HCT116 (cell line): ENCODE measurements at regions of chr17 and their contacts with region 1.

Region 1: GRCh38 chr17:66567234-66568170 is 265.1 kb downstream of the PRKCA start:
- DNase-seq: peak; percentile 71
- ATAC-seq: peak; percentile 97
- H3K4me3 ChIP-seq: no peak overlapping the region
- H3K27ac ChIP-seq: no peak overlapping the region
- H3K4me1 ChIP-seq: peaks cover 14 to 19% of the 10 kb centered on the region in 2 experiments; a peak in 3 of 4 replicates
- H3K27me3 ChIP-seq: no peaks in the 10 kb centered on the region
- CTCF ChIP-seq: peak; percentile 88 to 99 (median 98)
- POLR2A ChIP-seq: no peak
- RAD21 ChIP-seq: peak; percentile 98

Region 2: GRCh38 chr17:66255112-66255511 is 312.4 kb before region 1 on chr17:
- CTCF ChIA-PET with region 1: interaction called, 12 read pairs
- POLR2A ChIA-PET with region 1: no interaction called
- RAD21 ChIA-PET with region 1: interaction called, 6 to 8 read pairs
- intact Hi-C with region 1: loop called (anchors 1 kb)
- DNase-seq: peak; percentile 79
- ATAC-seq: peak; percentile 95
- H3K4me3 ChIP-seq: no peak overlapping the region
- H3K27ac ChIP-seq: no peak overlapping the region
- H3K4me1 ChIP-seq: peaks cover 0 to 4% of the 10 kb centered on the region in 2 experiments; a peak in 1 of 4 replicates
- H3K27me3 ChIP-seq: no peaks in the 10 kb centered on the region; the same call in 1 of the 2 replicates
- CTCF ChIP-seq: peak; percentile 75 to 97 (median 91)
- POLR2A ChIP-seq: no peak
- RAD21 ChIP-seq: peak; percentile 99

Region 3: DNA sequence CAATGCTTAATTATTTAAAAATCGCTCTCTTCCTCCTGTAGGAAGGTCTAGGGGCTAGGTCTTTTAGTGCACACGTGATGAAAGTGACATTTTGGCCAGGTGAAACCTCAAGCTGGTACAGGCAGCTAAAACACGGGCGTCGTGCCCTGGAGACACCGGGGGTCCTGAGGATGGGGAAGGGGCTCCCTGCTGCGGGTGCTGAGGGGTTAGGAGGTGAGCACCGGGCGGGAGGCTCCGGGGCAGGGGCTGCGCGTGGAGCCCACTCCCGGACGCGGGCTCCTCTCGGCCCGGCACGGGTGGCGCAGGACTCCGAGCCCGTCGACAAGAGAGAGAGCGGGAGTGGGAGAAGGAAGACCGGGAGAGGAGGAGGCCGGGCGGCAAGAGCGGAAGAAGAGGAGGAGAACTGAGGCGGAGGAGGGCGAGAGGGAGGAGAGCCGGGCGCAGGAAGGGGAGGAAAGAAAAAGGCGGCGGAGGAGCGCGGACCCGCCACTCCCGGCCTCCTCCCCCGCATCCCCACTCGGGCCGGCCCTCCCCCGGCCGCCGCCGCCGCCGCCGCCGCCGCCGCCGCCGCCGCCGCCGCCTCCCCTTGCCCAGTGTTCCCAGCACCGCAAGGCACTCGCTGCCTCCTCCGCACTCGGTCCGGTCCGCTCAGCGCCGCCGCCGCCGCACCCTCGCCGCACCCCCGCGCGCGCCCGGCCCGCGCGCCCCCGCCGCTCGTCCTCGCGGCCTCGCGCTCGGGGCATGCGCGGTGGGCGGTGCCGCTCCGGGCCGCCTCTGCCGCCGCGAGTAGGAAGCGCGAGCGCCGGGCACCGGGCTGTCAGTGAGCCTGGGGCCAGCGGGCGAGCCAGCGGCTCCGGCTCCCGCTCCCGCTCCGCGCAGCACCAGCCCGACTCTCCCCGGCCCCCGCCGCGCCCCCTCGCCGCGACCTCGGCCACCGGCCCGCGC is 265.4 kb before region 1 on chr17 and contains the start of gene PRKCA:
- CTCF ChIA-PET with region 1: no interaction called
- POLR2A ChIA-PET with region 1: no interaction called
- RAD21 ChIA-PET with region 1: no interaction called
- intact Hi-C with region 1: loop called (anchors 5 kb)
- DNase-seq: peak; percentile 29
- ATAC-seq: peak; percentile 87
- H3K4me3 ChIP-seq: peak within 1 kb of the TSS; percentile 69 to 81
- H3K27ac ChIP-seq: peak within 1 kb of the TSS; percentile 33; the same call in 1 of the 2 replicates
- H3K4me1 ChIP-seq: peaks cover 6 to 22% of the 10 kb centered on the region in 2 experiments; a peak in 3 of 4 replicates
- H3K27me3 ChIP-seq: no peaks in the 10 kb centered on the region
- CTCF ChIP-seq: no peak
- POLR2A ChIP-seq: peak; percentile 87
- RAD21 ChIP-seq: no peak
- total RNA-seq, gene PRKCA: 18.8 TPM

Region 4: GRCh38 chr17:66426397-66427033 is 141.0 kb before region 1 on chr17:
- CTCF ChIA-PET with region 1: interaction called, 3 read pairs
- POLR2A ChIA-PET with region 1: no interaction called
- RAD21 ChIA-PET with region 1: interaction called in 1 of 2 experiments, 3 read pairs
- intact Hi-C with region 1: loop called (anchors 5 kb)
- DNase-seq: peak; percentile 31
- ATAC-seq: peak; percentile 98
- H3K4me3 ChIP-seq: no peak overlapping the region
- H3K27ac ChIP-seq: no peak overlapping the region
- H3K4me1 ChIP-seq: peaks cover 0 to 7% of the 10 kb centered on the region in 2 experiments; a peak in 1 of 4 replicates
- H3K27me3 ChIP-seq: no peaks in the 10 kb centered on the region
- CTCF ChIP-seq: peak; percentile 54 to 65 (median 63)
- POLR2A ChIP-seq: no peak
- RAD21 ChIP-seq: peak; percentile 76

Region 5: GRCh38 chr17:66549731-66550207 is 17.7 kb before region 1 on chr17:
- CTCF ChIA-PET with region 1: interaction called, 32 read pairs
- POLR2A ChIA-PET with region 1: no interaction called
- RAD21 ChIA-PET with region 1: no interaction called
- intact Hi-C with region 1: no loop called
- DNase-seq: peak; percentile 44
- ATAC-seq: peak; percentile 18
- H3K4me3 ChIP-seq: peak overlapping the region in 1 of 2 experiments; percentile 50; a peak in 2 of 4 replicates
- H3K27ac ChIP-seq: peak overlapping the region; percentile 61
- H3K4me1 ChIP-seq: peaks cover 50 to 51% of the 10 kb centered on the region in 2 experiments
- H3K27me3 ChIP-seq: no peaks in the 10 kb centered on the region
- CTCF ChIP-seq: no peak
- POLR2A ChIP-seq: no peak
- RAD21 ChIP-seq: no peak

Region 6: GRCh38 chr17:66737524-66737923 is 170.0 kb after region 1 on chr17:
- CTCF ChIA-PET with region 1: no interaction called
- POLR2A ChIA-PET with region 1: no interaction called
- RAD21 ChIA-PET with region 1: no interaction called
- intact Hi-C with region 1: no loop called
- DNase-seq: no peak
- ATAC-seq: no peak; the same call in 1 of the 2 replicates
- H3K4me3 ChIP-seq: no peak overlapping the region
- H3K27ac ChIP-seq: no peak overlapping the region
- H3K4me1 ChIP-seq: no peaks in the 10 kb centered on the region
- H3K27me3 ChIP-seq: no peaks in the 10 kb centered on the region
- CTCF ChIP-seq: no peak
- POLR2A ChIP-seq: no peak
- RAD21 ChIP-seq: no peak

Region 7: GRCh38 chr17:66975604-66976384 is 408.3 kb after region 1 on chr17:
- CTCF ChIA-PET with region 1: no interaction called
- POLR2A ChIA-PET with region 1: no interaction called
- RAD21 ChIA-PET with region 1: no interaction called
- intact Hi-C with region 1: no loop called
- DNase-seq: peak; percentile 48
- ATAC-seq: peak; percentile 94
- H3K4me3 ChIP-seq: no peak overlapping the region
- H3K27ac ChIP-seq: no peak overlapping the region
- H3K4me1 ChIP-seq: peaks cover 10 to 16% of the 10 kb centered on the region in 2 experiments; a peak in 2 of 4 replicates
- H3K27me3 ChIP-seq: no peaks in the 10 kb centered on the region
- CTCF ChIP-seq: peak; percentile 71 to 92 (median 86)
- POLR2A ChIP-seq: no peak
- RAD21 ChIP-seq: peak; percentile 98